Heart left ventricle (tissue), 16 donors: ENCODE measurements at regions of chr20 and their contacts with region 1.

Region 1: DNA sequence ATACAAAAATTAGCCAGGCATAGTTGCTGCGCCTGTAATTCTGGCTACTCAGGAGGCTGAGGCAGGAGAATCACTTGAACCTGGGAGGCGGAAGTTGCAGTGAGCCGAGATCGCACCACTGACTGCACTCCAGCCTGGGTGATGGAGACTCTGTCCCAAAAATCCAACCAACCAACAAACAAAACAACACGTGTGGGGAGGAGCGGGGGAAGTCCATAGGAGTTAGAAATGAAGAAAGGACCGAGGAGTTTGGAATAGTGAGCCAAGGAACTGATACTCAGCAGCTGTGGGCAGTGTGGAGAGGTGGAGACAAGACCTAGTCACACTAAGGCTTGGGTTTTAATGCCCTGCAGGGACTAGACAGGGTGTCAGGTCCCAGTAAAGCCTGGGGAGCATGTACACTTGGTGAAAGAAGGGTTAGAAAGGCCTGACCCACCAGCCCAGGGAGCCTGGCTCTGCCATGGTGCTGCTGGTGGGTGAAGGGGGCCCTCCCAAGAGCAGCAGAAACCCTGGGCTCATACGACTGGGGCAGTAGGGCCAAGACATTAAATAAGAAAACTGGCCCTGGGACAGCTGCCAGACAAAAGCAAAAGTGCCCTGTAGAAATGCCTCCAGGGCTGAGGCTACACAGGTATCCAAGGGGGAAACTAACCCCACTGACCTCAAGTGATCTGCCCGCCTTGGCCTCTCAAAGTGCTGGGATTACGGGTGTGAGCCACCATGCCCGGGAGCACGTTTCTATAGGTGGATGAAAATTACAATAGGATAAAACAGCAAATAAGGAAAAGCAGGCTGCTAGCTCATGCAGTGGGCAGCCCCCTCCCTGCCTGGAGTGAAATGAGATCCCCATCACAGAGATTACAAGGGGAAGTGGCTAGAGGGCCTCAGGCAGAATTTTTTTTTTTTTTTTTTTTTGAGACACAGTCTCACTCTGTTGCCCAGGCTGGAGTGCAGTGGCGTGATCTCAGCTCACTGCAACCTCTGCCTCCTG is 58.0 kb downstream of the MYH7B start:
- DNase-seq: no peak
- ATAC-seq: no peak
- H3K4me3 ChIP-seq: no peak overlapping the region
- H3K27ac ChIP-seq: no peak overlapping the region
- H3K4me1 ChIP-seq: peaks cover 0 to 39% (median 2%) of the 10 kb centered on the region in 12 donors
- H3K27me3 ChIP-seq: no peaks in the 10 kb centered on the region
- CTCF ChIP-seq: no peak
- POLR2A ChIP-seq: no peak

Region 2: DNA sequence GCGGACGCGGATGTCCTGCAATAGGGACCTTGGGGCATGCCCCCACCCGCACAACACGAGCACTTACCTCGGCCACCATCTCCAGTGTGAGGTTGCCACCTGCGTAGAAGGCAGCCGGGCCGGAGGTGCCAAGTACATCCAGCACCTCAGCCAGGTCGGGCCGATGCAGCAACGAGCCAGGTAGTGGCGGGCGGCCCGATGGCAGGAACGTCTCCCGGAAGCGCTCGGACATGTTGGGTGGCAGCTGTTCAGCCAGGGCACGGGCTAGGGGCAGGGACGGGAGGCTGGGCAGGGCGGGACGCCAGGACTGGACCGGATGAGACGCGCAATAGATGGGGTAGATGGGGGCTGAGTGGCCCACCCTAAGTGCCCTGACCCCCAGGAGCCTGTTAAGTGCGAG is 154.3 kb before region 1 on chr20:
- intact Hi-C with region 1: loop called in 1 of 10 experiments (anchors 5 kb)
- DNase-seq: no peak
- ATAC-seq: no peak
- H3K4me3 ChIP-seq: no peak overlapping the region
- H3K27ac ChIP-seq: no peak overlapping the region
- H3K4me1 ChIP-seq: peaks cover 0 to 8% (median 0%) of the 10 kb centered on the region in 12 donors
- H3K27me3 ChIP-seq: no peaks in the 10 kb centered on the region
- CTCF ChIP-seq: no peak
- POLR2A ChIP-seq: no peak

Region 3: GRCh38 chr20:35085477-35086225 is 71.9 kb after region 1 on chr20:
- intact Hi-C with region 1: loop called in 1 of 10 experiments (anchors 10 kb)
- DNase-seq: no peak
- ATAC-seq: no peak
- H3K4me3 ChIP-seq: no peak overlapping the region
- H3K27ac ChIP-seq: no peak overlapping the region
- H3K4me1 ChIP-seq: peaks cover 0 to 66% (median 36%) of the 10 kb centered on the region in 12 donors
- H3K27me3 ChIP-seq: no peaks in the 10 kb centered on the region
- CTCF ChIP-seq: no peak
- POLR2A ChIP-seq: no peak